Aorta (tissue), 5 donors: ENCODE measurements at regions of chr14 and their contacts with region 1.

Region 1: GRCh38 chr14:90513161-90514014 is 116.6 kb downstream of the CALM1 start:
- DNase-seq: peak; percentile 78 to 87
- ATAC-seq: peak; percentile 85
- H3K4me3 ChIP-seq: no peak overlapping the region
- H3K27ac ChIP-seq: peak overlapping the region in 1 of 2 donors; percentile 9
- H3K4me1 ChIP-seq: no peaks in the 10 kb centered on the region
- H3K27me3 ChIP-seq: no peaks in the 10 kb centered on the region

Region 2: DNA sequence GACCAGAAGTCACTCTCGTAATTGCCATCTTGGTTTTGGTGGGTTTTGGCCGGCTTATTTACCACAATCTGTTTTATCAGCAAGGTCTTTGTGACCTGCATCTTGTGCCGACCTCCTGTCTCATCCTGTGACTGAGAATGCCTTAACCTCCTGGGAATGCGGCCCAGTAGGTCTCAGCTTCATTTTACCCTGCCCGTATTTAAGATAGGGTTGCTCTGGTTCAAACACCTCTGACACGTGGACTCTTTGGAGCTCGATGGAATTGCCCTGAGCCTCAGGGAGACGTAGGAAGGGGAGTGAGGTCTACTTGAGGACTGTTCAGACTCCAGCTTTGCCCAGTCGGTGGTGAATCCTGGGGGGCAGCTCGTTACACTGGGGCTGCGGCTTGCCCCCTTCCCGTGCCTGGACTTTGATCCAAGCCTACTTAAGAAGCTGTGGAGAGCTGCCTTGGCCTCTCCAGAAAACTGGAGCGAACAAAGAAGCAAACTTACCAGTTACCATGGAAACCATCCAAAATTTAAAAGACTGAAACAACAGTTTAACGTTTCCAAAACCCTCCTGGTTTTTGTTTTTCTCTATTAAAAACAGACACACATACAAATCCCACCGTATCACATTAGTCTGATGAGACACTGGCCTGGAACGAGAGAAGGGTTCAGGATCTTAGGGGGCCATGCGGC is 88.6 kb before region 1 on chr14:
- intact Hi-C with region 1: loop called in 1 of 2 experiments (anchors 5 kb)
- DNase-seq: peak in 1 of 2 donors; percentile 53
- ATAC-seq: no peak
- H3K4me3 ChIP-seq: no peak overlapping the region
- H3K27ac ChIP-seq: no peak overlapping the region
- H3K4me1 ChIP-seq: no peaks in the 10 kb centered on the region
- H3K27me3 ChIP-seq: no peaks in the 10 kb centered on the region

Region 3: DNA sequence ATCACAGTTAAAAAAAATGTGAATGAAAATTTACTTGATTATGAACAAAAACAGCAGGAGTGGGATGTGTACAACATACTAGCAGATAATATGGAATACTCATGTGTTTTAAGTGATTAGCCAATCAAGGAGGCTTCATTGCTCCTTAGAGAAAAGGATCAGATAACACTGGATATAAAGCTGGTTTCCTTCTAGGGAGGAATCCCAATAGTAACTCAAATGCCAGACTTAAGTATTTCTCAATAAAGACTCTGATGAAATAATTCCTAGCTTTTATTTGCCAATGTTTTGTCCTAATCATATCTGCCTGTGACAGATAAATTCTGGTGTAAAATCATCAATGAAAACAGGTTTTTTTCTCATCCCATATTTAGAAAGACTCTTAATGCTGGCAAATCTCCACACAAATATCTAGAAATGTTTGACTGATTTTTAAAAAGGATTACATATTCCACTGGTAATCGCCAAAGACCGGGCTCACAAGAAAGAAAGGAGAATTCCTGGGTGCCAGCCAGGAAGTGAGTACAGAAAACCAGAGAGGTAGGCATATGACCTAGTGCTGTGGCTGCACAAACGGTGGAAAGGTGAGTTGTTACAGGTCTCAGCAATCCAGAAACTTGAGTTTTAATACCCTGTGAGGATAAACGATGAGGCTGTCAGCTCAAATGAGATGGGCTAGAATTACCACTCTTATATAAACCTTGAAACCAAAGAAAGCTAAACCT is 411.4 kb after region 1 on chr14:
- intact Hi-C with region 1: no loop called
- DNase-seq: no peak
- ATAC-seq: no peak
- H3K4me3 ChIP-seq: no peak overlapping the region
- H3K27ac ChIP-seq: no peak overlapping the region
- H3K4me1 ChIP-seq: no peaks in the 10 kb centered on the region
- H3K27me3 ChIP-seq: no peaks in the 10 kb centered on the region